Endothelial cell of umbilical vein (primary cell): ENCODE measurements at regions of chr16 and their contacts with region 1.

Region 1: GRCh38 chr16:17380613-17381012 is 90.1 kb downstream of the XYLT1 start:
- DNase-seq: no peak
- H3K4me3 ChIP-seq: no peak overlapping the region
- H3K27ac ChIP-seq: peak overlapping the region; percentile 18
- H3K4me1 ChIP-seq: peaks cover 18% of the 10 kb centered on the region
- H3K27me3 ChIP-seq: no peaks in the 10 kb centered on the region
- CTCF ChIP-seq: no peak
- POLR2A ChIP-seq: no peak

Region 2: DNA sequence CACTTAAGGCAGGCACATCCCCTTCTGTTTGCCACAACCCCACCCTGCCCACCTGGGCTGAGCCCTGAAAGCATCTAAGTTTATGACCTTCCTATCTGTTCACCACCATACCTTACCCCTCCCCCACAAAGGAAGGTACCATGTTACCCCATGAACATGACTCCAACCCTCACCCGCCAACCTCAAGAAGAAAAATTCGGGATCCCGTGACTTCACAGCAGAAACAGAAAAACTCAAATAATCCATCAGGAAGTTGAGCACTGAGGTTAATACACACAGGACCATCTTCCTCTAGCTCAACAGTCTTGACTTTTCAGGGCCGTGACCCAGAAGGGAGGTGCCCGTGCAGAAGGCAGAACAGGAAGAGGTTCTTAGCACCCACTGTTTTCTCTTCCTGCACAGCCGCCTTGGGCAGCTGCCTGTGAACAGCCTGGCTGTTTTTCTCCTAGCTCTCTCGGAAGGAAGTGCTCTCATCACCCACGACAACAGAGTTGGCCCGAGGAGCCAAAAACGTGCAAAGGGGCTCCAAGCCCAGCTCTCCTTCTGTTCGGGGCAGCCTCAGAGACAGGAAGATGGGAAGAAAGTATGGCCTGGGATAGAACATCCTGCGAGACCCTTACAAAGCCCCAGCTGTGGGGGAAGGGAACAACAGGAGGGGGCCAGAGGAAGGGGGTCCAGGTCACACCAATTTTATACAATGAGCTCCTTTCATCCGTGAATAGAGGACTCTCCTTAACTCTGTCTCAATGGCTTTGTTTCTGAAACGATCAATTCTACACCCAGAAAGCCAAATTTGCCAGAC is 11.0 kb before region 1 on chr16:
- CTCF ChIA-PET with region 1: no interaction called
- POLR2A ChIA-PET with region 1: no interaction called
- dilution Hi-C with region 1: no loop called
- intact Hi-C with region 1: loop called (anchors 1 kb)
- DNase-seq: peak; percentile 3
- H3K4me3 ChIP-seq: no peak overlapping the region
- H3K27ac ChIP-seq: peak overlapping the region; percentile 20
- H3K4me1 ChIP-seq: peaks cover 29% of the 10 kb centered on the region
- H3K27me3 ChIP-seq: no peaks in the 10 kb centered on the region
- CTCF ChIP-seq: no peak
- POLR2A ChIP-seq: no peak

Region 3: DNA sequence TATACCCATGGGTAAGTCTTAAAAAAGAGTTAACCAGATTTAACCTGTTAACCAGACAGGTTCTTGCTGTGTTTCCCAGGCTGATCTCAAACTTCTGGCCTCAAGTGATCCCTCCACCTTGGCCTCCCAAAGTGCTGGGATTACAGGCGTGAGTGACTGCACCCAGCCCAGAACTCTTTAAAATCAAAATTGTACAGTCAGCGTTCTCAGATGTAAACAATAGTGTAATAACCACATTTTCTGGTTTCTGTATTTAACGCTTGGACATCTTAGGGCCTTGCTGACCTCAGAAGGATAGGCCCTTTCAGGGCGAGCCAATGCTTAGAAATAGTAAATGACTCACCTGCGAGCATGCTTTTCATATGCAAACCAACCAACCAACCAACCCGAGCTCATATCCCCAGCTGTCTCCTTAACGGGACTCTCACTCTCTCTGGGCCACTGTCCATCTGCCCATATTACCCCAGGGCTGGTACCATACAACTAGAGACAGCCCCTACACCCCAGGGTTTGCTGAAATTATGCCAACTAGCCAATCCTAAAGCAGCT is 505.1 kb after region 1 on chr16:
- CTCF ChIA-PET with region 1: no interaction called
- POLR2A ChIA-PET with region 1: no interaction called
- dilution Hi-C with region 1: no loop called
- intact Hi-C with region 1: no loop called
- DNase-seq: no peak
- H3K4me3 ChIP-seq: no peak overlapping the region
- H3K27ac ChIP-seq: no peak overlapping the region
- H3K4me1 ChIP-seq: no peaks in the 10 kb centered on the region
- H3K27me3 ChIP-seq: no peaks in the 10 kb centered on the region
- CTCF ChIP-seq: no peak
- POLR2A ChIP-seq: no peak